ENCODE measurements at regions of chr1 and their contacts with region 1.

Region 1: GRCh38 chr1:208238710-208239472 is 5.3 kb downstream of the PLXNA2 start:
- DNase-seq: no peak
- H3K4me3 ChIP-seq: no peak overlapping the region
- CTCF ChIP-seq: peak; percentile 74

Region 2: GRCh38 chr1:208071435-208072031 is 167.4 kb before region 1 on chr1:
- CTCF ChIA-PET with region 1: interaction called, 16 read pairs
- POLR2A ChIA-PET with region 1: no interaction called
- DNase-seq: no peak
- H3K4me3 ChIP-seq: no peak overlapping the region
- CTCF ChIP-seq: no peak

Region 3: DNA sequence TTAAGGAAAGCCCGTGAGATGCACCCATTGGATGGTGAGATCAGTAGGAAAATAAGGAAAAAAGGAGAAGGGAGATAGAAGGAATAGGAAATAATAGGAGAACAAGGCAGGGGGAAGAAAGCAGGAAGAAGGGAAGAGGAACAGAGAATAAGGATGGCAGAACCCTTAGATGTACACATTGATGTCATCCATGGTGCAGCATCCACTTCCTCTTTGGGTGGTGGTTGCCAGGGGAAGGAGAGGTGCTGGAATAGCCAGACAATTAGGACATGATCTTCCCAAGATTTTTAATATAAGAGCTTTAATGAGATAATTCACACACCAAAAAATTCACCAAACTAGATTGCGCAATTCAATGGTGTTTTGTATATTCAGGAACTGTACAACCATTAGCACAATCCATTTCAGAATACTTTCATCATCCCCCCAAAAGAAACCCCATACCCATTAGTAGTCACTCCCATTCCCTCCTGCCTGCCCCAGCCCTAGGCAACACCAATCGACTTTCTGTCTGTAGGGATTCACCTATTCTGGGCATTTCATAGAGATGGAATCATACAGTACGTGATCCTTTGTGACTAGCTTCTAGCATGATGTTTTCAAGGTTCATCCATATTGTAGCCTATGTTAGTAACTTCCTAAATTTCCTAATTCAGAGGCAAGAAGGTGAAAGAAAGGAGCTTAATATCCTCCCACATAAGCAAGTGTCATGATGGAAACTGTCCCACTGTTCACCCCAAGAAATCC is 116.1 kb before region 1 on chr1:
- CTCF ChIA-PET with region 1: interaction called, 242 read pairs
- POLR2A ChIA-PET with region 1: no interaction called
- DNase-seq: no peak
- H3K4me3 ChIP-seq: no peak overlapping the region
- CTCF ChIP-seq: no peak

Region 4: GRCh38 chr1:208149776-208150514 is 88.9 kb before region 1 on chr1:
- CTCF ChIA-PET with region 1: interaction called, 16 read pairs
- POLR2A ChIA-PET with region 1: no interaction called
- DNase-seq: no peak
- H3K4me3 ChIP-seq: no peak overlapping the region
- CTCF ChIP-seq: no peak

Region 5: DNA sequence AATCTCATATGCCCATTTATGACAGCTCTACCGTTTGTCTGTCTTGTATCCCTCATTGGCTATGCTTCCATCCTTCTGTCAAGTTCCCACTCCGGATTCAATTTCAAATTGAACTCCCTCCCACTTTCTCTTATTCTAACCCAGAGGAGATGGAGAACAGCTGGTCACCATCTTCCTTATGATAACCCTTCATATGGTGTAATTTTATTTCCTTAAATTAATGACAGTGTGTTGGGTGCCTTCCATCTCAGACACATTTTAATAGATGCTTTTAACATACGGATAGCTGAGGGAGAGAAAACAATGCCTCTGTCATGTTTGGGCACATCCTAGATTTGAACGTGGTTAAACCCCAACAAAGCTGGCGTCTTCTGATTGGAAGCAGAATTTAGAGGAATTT is 108.3 kb after region 1 on chr1:
- CTCF ChIA-PET with region 1: no interaction called
- POLR2A ChIA-PET with region 1: no interaction called
- DNase-seq: no peak
- H3K4me3 ChIP-seq: no peak overlapping the region
- CTCF ChIP-seq: no peak

Measured in AG04449 (cell line).